ENCODE measurements at regions of chr7 and their contacts with region 1.

Region 1: DNA sequence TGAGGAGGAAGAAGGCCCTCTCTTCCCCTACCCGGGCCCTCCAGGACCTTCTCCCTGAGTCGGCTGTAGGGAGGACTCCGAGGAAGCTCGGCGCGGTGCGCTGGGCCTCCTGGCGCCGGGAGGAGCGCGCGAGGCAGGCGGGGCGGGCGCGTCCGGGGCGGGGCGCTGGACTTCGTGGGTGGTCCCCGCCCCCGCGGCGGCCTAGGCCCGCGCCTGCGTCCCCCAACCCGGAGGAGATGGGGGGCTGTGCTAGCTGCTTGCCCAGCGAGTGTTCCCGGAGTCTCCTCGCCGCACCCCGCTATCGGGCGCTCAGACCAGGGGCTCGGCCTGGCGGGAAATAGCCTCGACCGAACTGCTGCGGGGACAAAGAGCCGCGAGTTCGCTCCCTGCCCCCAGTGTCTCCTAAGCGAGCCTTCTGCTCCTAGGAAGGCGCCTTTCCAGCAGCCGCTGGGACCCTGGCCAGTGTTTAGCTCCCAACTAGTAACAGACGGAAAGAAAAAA is 19.2 kb upstream of the SMO start:
- DNase-seq: no peak
- H3K4me3 ChIP-seq: peak overlapping the region; percentile 55
- CTCF ChIP-seq: no peak

Region 2: DNA sequence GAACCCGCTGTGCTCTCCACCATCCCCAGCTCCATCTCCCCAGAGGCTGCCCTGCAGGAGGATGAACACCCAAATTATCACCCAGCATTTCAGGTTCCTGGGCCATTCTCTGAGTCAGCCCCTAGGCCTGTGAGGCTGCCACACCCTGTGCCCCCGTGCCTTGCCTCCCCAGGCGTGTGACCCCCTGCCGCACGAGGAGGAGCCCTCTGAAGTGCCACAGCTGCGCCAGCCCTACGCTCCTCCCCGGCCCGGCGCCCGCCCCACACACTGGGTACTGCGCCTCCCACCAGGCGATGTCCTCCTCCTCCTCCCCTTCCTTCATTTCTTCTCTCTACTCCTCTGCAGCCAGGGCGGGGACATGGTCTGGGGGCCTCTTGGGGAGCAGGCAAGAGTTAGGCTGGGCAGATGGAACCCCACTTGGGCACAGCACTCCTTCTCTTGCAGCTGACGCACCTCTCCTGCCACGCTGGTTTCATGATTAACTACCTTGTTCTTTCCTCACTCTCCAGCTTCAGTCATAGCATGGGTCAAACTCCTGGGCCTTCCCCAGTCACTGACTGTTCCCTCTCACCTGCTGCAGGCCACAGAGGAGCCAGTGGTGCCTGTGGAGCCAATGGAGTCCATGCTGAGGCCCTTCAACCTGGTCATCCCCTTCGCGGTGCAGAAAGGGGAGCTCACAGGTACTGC is 319.3 kb before region 1 on chr7:
- CTCF ChIA-PET with region 1: no interaction called
- POLR2A ChIA-PET with region 1: no interaction called
- DNase-seq: no peak
- H3K4me3 ChIP-seq: no peak overlapping the region
- CTCF ChIP-seq: no peak

Region 3: DNA sequence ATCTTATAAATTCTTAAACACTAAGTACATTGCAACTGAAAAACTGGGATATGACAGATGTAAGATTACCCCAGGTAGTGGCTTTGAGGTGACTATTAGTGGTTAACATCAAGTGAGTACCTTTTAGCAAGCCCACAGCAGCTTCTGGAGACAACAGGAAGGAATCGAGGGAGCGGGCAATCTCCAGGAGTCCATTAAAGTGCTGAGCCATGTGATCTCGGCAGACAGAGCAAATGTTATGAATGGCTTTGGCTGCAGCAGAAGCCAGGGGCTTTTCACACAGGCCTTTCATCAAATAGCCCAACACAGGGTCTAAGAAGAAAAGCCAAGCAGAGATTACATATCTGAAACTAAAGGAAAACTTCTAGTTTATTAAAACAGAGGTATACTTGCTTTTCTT is 182.6 kb before region 1 on chr7:
- CTCF ChIA-PET with region 1: no interaction called
- POLR2A ChIA-PET with region 1: no interaction called
- DNase-seq: no peak
- H3K4me3 ChIP-seq: no peak overlapping the region
- CTCF ChIP-seq: no peak

Region 4: DNA sequence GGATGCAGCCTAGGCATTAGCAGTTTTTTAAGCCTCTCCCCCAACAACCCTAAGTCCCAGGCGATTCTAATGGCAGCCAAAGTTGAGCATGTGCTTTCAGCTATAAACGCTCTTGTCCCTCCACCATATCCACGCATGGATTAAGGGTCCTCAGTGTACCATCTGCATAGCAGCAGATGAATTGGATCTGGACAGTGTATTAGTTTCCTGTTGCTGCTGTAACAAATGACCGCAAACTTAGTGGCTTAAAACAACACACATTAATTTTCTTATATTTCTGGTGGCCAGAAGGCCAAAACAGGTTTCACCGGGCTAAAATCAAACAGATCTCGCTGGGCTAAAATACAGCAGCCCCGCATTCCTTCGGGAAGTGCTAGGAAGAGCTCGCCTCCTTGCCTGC is 11.6 kb before region 1 on chr7:
- CTCF ChIA-PET with region 1: interaction called, 41 read pairs
- POLR2A ChIA-PET with region 1: no interaction called
- DNase-seq: no peak
- H3K4me3 ChIP-seq: no peak overlapping the region
- CTCF ChIP-seq: no peak

Region 5: GRCh38 chr7:129197771-129198170 is 28.6 kb after region 1 on chr7:
- CTCF ChIA-PET with region 1: interaction called, 12 read pairs
- POLR2A ChIA-PET with region 1: no interaction called
- DNase-seq: no peak
- H3K4me3 ChIP-seq: no peak overlapping the region
- CTCF ChIP-seq: no peak